SK-N-SH (cell line): ENCODE measurements at regions of chr14 and their contacts with region 1.

Region 1: GRCh38 chr14:21510735-21511657 is at the start of gene METTL3:
- DNase-seq: peak; percentile 85
- H3K4me3 ChIP-seq: peak within 1 kb of the TSS; percentile 78 to 89
- H3K27ac ChIP-seq: peak within 1 kb of the TSS; percentile 78 to 84
- H3K4me1 ChIP-seq: peaks cover 0 to 9% of the 10 kb centered on the region in 2 experiments; a peak in 3 of 4 replicates
- H3K27me3 ChIP-seq: no peaks in the 10 kb centered on the region
- CTCF ChIP-seq: no peak
- EP300 ChIP-seq: no peak
- RAD21 ChIP-seq: no peak
- polyA plus RNA-seq, gene METTL3: 118 and 198 TPM in 2 replicates

Region 2: GRCh38 chr14:21346549-21347135 is 164.4 kb before region 1 on chr14:
- CTCF ChIA-PET with region 1: no interaction called
- POLR2A ChIA-PET with region 1: no interaction called
- DNase-seq: no peak
- H3K4me3 ChIP-seq: no peak overlapping the region
- H3K27ac ChIP-seq: no peak overlapping the region
- H3K4me1 ChIP-seq: no peaks in the 10 kb centered on the region
- H3K27me3 ChIP-seq: no peaks in the 10 kb centered on the region
- CTCF ChIP-seq: no peak
- EP300 ChIP-seq: no peak
- RAD21 ChIP-seq: no peak

Region 3: GRCh38 chr14:21476925-21477681 is 33.9 kb before region 1 on chr14 and contains the starts of genes RAB2B and TOX4:
- CTCF ChIA-PET with region 1: interaction called, 5 read pairs
- POLR2A ChIA-PET with region 1: interaction called, 10 read pairs
- DNase-seq: peak; percentile 93
- H3K4me3 ChIP-seq: peak within 1 kb of the TSS; percentile 85 to 99
- H3K27ac ChIP-seq: peak within 1 kb of the TSS; percentile 78 to 86
- H3K4me1 ChIP-seq: peaks cover 4 to 6% of the 10 kb centered on the region in 2 experiments; a peak in 2 of 4 replicates
- H3K27me3 ChIP-seq: no peaks in the 10 kb centered on the region
- CTCF ChIP-seq: peak; percentile 91
- EP300 ChIP-seq: no peak
- RAD21 ChIP-seq: no peak
- polyA plus RNA-seq, gene RAB2B: 24.4 and 41.2 TPM in 2 replicates
- polyA plus RNA-seq, gene TOX4: 52.3 and 69.3 TPM in 2 replicates

Region 4: GRCh38 chr14:21525962-21526671 is 15.1 kb after region 1 on chr14 and contains the start of gene SALL2:
- CTCF ChIA-PET with region 1: no interaction called
- POLR2A ChIA-PET with region 1: interaction called, 36 read pairs
- DNase-seq: peak; percentile 93
- H3K4me3 ChIP-seq: peak within 1 kb of the TSS; percentile 75 to 77
- H3K27ac ChIP-seq: peak within 1 kb of the TSS in 1 of 2 experiments; percentile 82; a peak in 2 of 4 replicates
- H3K4me1 ChIP-seq: peaks cover 0 to 16% of the 10 kb centered on the region in 2 experiments; a peak in 1 of 4 replicates
- H3K27me3 ChIP-seq: peaks cover 6% of the 10 kb centered on the region; the same call in 1 of the 2 replicates
- CTCF ChIP-seq: no peak
- EP300 ChIP-seq: no peak
- RAD21 ChIP-seq: no peak
- polyA plus RNA-seq, gene SALL2: 7.5 and 9.1 TPM in 2 replicates

Region 5: GRCh38 chr14:21557084-21557901 is 46.3 kb after region 1 on chr14:
- CTCF ChIA-PET with region 1: interaction called, 18 read pairs
- POLR2A ChIA-PET with region 1: interaction called, 5 read pairs
- DNase-seq: peak; percentile 65
- H3K4me3 ChIP-seq: peak overlapping the region; percentile 32 to 57
- H3K27ac ChIP-seq: peak overlapping the region in 1 of 2 experiments; percentile 4; a peak in 1 of 4 replicates
- H3K4me1 ChIP-seq: no peaks in the 10 kb centered on the region; a peak in 1 of 4 replicates
- H3K27me3 ChIP-seq: no peaks in the 10 kb centered on the region
- CTCF ChIP-seq: peak; percentile 81
- EP300 ChIP-seq: no peak
- RAD21 ChIP-seq: peak; percentile 87